Cardiac septum (tissue), 1 donor: ENCODE measurements at regions of chr7 and their contacts with region 1.

Region 1: DNA sequence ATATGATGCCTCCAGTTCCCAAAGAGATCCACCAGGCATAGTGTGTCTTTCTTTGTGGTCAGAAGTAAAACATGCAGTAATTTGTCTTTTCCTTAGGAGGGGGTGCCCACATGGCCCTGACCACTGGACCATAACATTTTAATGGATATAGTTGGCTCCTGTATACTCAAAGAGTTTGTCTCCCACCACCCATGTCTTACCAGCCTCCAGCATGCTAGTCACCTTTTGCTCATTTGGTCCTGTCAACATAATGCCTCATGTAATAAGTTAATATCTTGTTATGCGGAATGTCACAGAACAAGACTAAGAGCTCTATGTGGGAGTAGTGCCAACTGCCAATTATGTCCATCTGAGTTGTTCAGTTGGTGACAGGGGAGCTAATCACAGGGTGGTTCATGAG is 83.4 kb upstream of the IFRD1 start:
- DNase-seq: no peak

Region 2: DNA sequence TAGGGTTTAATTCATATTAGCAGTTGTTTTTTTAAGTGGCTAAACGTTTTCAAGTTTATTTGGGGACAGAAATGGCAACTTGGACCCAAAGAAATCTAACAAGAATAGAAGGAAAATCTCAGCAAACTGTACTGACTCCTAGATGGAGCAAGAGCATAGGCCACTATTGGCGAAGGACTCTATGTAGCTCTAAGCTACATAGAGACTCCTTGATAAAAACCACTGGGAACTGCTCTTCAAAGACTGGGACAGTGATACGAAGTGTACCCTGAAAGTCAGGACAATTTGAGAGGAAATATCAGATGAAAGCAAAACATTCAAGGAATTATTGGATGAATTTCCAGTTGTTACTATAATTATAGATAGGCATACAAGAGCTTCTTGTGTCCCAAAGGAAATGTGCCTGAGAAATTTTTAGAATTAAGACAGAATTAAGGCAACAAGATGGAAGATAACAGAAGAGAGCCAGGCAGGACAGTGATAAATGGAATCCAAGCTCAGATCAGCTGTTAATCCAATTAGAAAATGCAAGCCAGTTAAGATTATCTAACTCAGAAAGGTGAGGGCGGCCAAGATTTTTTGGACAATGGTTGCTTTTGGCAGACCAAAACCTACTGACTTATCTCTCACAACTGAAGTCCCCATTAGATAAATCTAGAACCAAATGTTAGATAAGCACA is 20.4 kb before region 1 on chr7:
- intact Hi-C with region 1: no loop called
- DNase-seq: no peak

Region 3: DNA sequence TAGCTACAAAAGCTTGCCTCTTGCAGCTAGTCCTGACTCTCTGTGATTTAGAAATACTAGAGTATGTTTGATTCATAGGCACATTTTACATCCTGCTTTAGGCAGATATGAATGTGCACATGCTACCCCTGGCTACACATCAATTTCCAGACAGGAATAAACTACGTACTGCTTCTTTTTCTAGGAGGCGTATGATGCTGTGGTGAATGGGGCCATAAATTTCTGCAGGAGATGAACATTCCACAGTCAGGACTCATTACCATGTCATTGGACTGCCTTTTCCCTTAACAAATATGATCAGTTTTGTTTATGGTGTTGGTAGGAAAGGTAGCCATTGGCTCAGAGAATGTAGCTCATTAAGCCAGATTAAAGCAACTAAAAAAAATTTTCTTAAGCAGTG is 33.3 kb after region 1 on chr7:
- intact Hi-C with region 1: loop called (anchors 5 kb)
- DNase-seq: no peak